ENCODE measurements at regions of chr4 and their contacts with region 1.

Region 1: DNA sequence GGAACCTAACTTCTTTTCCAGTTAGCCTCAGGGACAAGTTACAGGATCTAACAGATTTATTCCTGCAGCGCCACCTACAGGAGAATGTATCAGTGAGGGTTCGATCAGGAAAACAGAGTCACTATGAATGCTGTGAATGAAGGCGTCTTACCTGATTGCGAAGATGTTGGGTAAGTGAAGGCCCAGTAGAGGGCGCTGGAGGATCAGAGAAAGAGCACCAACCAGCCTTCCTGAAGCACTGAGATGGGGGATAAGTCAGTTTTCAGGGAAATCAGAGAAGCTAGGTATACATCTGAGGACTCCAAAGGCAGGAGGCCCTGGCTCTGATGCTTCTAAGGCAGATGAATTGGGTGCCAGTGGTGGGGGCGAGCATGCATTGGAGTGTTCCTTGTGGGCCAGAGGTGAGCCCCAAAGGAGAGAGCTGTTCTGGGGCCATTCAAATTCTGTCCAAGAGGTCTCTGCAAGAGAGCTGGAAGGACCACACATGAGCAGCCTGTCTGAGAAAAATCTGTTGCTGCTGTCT is 169.9 kb upstream of the AADAT start:
- DNase-seq: peak; percentile 59
- H3K4me3 Mint-ChIP-seq: no peak overlapping the region
- H3K27ac Mint-ChIP-seq: no peak overlapping the region
- H3K4me1 Mint-ChIP-seq: no peaks in the 10 kb centered on the region
- H3K27me3 Mint-ChIP-seq: no peaks in the 10 kb centered on the region

Region 2: GRCh38 chr4:170138580-170139194 is 121.0 kb before region 1 on chr4:
- CTCF ChIA-PET with region 1: no interaction called
- POLR2A ChIA-PET with region 1: no interaction called
- intact Hi-C with region 1: loop called (anchors 1 kb)
- DNase-seq: peak; percentile 76
- H3K4me3 Mint-ChIP-seq: no peak overlapping the region
- H3K27ac Mint-ChIP-seq: no peak overlapping the region
- H3K4me1 Mint-ChIP-seq: peaks cover 2% of the 10 kb centered on the region
- H3K27me3 Mint-ChIP-seq: no peaks in the 10 kb centered on the region

Region 3: GRCh38 chr4:170270628-170271027 is 10.9 kb after region 1 on chr4:
- CTCF ChIA-PET with region 1: interaction called, 14 read pairs
- POLR2A ChIA-PET with region 1: no interaction called
- intact Hi-C with region 1: no loop called
- DNase-seq: no peak
- H3K4me3 Mint-ChIP-seq: no peak overlapping the region
- H3K27ac Mint-ChIP-seq: no peak overlapping the region
- H3K4me1 Mint-ChIP-seq: no peaks in the 10 kb centered on the region
- H3K27me3 Mint-ChIP-seq: no peaks in the 10 kb centered on the region

Region 4: DNA sequence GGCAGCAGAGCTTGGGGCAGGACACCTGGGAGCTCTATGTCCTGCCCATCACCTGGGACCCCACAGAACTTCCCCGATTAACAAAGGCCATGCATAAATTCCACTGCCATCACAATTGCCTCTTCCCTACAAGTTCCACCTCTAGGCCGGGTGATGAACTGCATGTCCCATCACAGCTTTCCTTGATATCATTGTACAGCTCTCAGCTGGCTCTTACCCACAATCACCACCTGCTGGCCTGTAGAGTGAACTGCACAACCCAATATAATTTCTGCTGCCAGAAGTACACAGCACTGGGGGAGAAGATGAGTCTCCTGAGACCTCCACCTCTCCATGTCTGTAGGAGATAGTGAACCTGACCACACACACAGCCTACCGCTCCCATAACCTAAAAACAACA is 115.1 kb after region 1 on chr4:
- CTCF ChIA-PET with region 1: interaction called, 3 read pairs
- POLR2A ChIA-PET with region 1: no interaction called
- intact Hi-C with region 1: loop called (anchors 2 kb)
- DNase-seq: peak; percentile 10
- H3K4me3 Mint-ChIP-seq: no peak overlapping the region
- H3K27ac Mint-ChIP-seq: no peak overlapping the region
- H3K4me1 Mint-ChIP-seq: no peaks in the 10 kb centered on the region
- H3K27me3 Mint-ChIP-seq: no peaks in the 10 kb centered on the region

Region 5: DNA sequence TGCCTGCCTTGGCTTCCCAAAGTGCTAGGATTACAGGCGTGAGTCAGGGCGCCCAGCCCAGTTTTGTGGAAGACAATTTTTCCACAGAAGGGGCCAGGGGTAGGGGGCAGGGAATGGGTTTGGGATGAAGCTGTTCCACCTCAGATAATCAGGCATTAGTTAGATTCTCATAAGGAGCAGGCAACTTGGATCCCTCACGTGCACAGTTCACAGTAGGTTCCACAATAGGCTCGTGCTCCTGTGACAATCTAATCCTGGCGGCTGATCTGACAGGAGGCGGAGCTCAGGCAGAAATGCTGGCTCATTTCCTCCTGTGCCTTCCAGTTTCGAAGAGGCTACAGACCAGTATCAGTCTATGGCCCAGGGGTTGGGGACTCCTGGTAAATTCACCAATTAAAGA is 321.6 kb after region 1 on chr4:
- CTCF ChIA-PET with region 1: no interaction called
- POLR2A ChIA-PET with region 1: no interaction called
- intact Hi-C with region 1: no loop called
- DNase-seq: no peak
- H3K4me3 Mint-ChIP-seq: no peak overlapping the region
- H3K27ac Mint-ChIP-seq: no peak overlapping the region
- H3K4me1 Mint-ChIP-seq: no peaks in the 10 kb centered on the region
- H3K27me3 Mint-ChIP-seq: no peaks in the 10 kb centered on the region

Region 6: DNA sequence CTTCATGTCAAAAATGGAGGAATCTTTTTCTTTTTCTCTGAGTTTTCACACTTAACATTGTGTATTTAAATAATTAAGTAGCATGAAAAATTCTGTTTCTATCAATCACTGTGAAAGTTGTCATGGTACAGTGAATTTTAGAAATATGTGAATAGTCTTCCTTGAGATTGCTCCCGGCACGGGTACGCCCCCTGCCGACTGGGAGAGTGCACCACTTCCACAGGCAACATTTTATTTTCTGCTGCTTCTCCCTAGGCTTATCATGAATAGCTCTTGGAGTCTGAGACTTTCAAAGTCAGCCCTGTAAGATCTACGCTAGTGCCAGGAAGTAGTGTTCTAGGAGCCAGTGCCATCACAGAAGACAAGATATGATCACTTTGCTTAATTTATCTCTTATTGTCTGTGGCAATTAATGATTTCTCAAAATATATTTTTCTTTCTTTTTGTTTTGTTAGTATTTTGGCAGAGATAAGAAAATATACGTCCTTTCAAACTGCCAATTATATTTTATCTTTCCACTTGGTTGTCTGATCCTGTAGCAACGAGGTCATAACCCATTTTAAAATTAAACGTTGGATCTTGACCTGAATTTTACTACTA is 593.8 kb after region 1 on chr4:
- CTCF ChIA-PET with region 1: no interaction called
- POLR2A ChIA-PET with region 1: no interaction called
- intact Hi-C with region 1: loop called (anchors 2 kb)
- DNase-seq: peak; percentile 33
- H3K4me3 Mint-ChIP-seq: no peak overlapping the region
- H3K27ac Mint-ChIP-seq: no peak overlapping the region
- H3K4me1 Mint-ChIP-seq: no peaks in the 10 kb centered on the region
- H3K27me3 Mint-ChIP-seq: no peaks in the 10 kb centered on the region